Kidney (tissue), 22 donors: ENCODE measurements at regions of chr13 and their contacts with region 1.

Region 1: DNA sequence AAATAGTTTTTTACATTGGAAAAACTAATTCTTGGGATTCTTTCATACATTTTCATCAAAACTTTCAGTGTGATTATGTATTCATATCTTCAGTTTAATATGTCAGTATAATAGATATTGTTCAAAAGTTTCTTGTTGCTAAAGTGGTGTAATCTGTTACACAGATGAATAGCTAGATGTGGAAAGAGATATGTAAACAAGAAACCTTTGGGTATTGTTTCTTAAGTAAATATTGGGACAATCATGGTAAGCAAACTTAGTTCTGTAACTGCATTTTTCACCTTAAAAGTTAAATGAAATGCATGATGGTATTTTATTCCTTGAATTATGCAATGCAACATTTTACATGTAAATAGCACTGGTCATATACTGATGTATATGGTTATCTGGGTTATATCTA is 12.2 kb downstream of the ABHD13 start:
- DNase-seq: no peak
- H3K4me3 ChIP-seq: no peak overlapping the region
- H3K27ac ChIP-seq: no peak overlapping the region
- H3K4me1 ChIP-seq: no peaks in the 10 kb centered on the region
- H3K27me3 ChIP-seq: no peaks in the 10 kb centered on the region
- CTCF ChIP-seq: no peak

Region 2: DNA sequence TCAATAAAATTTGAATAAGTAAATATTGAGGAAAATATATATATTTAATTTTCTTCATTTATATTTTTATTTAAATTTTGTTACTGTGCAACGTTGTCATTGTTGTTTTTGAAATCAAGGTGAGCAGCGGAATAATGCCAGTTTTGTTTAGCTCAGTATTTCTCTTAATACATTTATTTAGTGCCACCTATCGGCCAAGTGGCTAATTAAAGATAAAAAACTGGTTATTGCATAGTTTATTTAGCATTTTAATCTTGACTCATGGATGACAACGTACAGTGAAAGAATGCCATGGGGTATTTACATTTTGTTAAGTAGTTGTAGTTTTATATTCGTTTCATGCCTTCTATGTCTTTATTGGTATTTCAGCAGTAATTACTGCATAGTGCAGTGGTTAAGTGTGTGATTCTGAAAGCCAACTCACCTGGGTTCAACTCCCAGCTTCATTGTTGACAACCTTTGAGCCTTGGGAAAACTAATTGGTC is 664.9 kb after region 1 on chr13:
- intact Hi-C with region 1: loop called (anchors 10 kb)
- DNase-seq: peak in 2 of 5 donors; percentile 69 to 76
- H3K4me3 ChIP-seq: no peak overlapping the region
- H3K27ac ChIP-seq: no peak overlapping the region
- H3K4me1 ChIP-seq: no peaks in the 10 kb centered on the region
- H3K27me3 ChIP-seq: no peaks in the 10 kb centered on the region
- CTCF ChIP-seq: peak; percentile 43